GM10248 (cell line): ENCODE measurements at regions of chr5 and their contacts with region 1.

Region 1: GRCh38 chr5:82185851-82186250 is 92.3 kb downstream of the RPS23 start:
- DNase-seq: no peak
- CTCF ChIP-seq: no peak

Region 2: GRCh38 chr5:82174128-82174918 is 11.5 kb before region 1 on chr5:
- CTCF ChIA-PET with region 1: interaction called, 15 read pairs
- POLR2A ChIA-PET with region 1: no interaction called
- DNase-seq: peak; percentile 70
- CTCF ChIP-seq: peak; percentile 66